Mammary epithelial cell (primary cell): ENCODE measurements at regions of chr11 and their contacts with region 1.

Region 1: DNA sequence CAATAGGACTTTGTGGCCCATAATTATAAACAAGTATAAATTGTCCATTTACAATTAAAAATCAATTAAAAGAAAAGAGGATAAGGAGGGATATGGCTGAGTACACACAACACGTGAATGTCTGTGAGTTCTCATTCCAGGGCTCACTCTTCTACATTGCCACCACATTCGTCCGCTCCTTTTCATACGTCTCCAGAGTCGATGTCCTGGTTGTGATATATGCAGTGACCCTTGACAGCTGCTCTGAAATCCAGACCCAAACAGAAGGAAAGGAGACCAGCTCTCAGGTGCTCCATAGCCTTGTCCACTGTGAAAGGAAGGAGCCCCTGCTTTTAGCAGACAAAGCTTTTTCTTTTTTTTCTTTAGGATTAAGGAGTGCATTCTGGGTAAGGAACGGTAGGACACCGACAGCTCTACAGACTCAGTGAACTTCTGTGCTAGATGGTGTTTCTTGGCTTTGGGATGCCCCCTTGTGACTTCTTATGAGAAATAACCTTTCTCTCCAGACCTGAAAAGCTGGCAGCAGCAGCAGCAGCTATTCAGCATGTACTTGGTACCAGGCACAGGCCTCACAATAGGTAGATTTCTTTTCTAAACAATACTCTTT is 19.7 kb upstream of the DNAJB13 start:
- DNase-seq: peak; percentile 68
- H3K4me3 ChIP-seq: no peak overlapping the region
- H3K27ac ChIP-seq: no peak overlapping the region
- H3K4me1 ChIP-seq: no peaks in the 10 kb centered on the region
- H3K27me3 ChIP-seq: no peaks in the 10 kb centered on the region
- CTCF ChIP-seq: peak; percentile 17 to 55

Region 2: DNA sequence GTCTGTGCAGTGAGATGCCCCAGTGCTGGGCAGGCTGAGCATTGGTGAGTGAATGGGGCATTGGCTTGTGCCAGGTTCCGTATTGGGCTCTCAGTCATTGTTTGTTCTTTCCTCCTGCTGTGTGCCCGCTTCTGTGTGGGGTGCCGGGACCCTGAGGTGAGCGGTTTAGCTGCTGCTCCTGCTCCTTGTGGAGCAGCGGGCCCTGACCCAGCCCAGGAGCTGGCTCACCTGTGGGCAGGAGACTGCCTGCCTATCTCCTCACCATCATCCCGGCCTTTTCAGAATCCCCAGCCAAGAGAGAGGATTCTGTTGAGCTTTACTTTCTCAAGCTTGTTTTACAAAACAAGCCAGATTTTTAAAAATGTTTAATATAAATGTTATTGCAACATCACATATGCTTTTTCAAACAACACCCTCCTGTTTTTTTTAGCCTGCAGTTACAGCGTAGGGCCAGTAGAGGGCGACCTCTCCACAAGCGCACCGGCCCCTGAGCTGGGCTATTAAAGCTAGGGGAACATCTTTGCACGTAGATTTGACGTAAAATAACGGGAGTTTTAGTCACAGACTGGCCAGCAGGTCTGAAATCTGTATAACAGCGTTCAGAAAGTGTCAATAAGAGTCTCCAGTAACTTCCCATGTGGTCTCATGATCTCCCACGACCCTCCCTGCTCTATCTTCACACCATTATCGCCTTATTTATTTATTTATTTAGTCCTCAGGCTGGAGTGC is 580.1 kb before region 1 on chr11:
- CTCF ChIA-PET with region 1: no interaction called
- dilution Hi-C with region 1: no loop called
- in situ Hi-C with region 1: no loop called
- intact Hi-C with region 1: loop called (anchors 1 kb)
- DNase-seq: peak; percentile 55
- H3K4me3 ChIP-seq: no peak overlapping the region
- H3K27ac ChIP-seq: no peak overlapping the region
- H3K4me1 ChIP-seq: peaks cover 7% of the 10 kb centered on the region
- H3K27me3 ChIP-seq: no peaks in the 10 kb centered on the region
- CTCF ChIP-seq: peak; percentile 97 to 99

Region 3: DNA sequence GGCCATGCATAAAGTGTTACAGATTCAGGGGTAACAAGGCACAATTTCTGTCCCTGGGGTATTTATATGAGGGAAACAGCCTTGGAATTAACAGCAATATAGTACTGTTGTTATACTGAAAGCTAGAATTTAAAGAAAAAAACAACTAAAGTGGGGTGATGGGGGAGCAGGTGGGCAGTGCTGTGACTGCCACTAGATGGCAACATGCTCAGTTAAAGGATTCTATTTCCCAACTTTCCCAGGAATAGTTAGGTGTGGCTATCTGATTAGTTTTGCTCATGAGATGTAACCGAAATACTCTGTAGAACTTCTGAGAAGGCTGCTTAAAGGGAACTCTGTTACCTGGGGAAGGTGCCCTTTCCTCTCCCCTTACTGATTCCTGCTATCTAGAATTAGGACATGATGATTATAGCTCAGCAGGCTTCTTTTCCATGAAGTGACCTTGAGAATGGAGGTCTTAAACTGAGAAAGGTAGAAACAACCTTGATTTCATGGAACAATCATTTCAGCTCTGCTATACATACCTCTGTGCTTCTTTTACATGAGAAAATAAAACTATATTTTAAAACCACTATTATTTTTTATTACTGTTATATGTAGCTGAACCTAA is 452.3 kb before region 1 on chr11:
- CTCF ChIA-PET with region 1: no interaction called
- dilution Hi-C with region 1: no loop called
- in situ Hi-C with region 1: no loop called
- intact Hi-C with region 1: loop called (anchors 2 kb)
- DNase-seq: peak; percentile 51
- H3K4me3 ChIP-seq: no peak overlapping the region
- H3K27ac ChIP-seq: peak overlapping the region; percentile 3
- H3K4me1 ChIP-seq: peaks cover 6% of the 10 kb centered on the region
- H3K27me3 ChIP-seq: no peaks in the 10 kb centered on the region
- CTCF ChIP-seq: peak; percentile 91 to 96

Region 4: DNA sequence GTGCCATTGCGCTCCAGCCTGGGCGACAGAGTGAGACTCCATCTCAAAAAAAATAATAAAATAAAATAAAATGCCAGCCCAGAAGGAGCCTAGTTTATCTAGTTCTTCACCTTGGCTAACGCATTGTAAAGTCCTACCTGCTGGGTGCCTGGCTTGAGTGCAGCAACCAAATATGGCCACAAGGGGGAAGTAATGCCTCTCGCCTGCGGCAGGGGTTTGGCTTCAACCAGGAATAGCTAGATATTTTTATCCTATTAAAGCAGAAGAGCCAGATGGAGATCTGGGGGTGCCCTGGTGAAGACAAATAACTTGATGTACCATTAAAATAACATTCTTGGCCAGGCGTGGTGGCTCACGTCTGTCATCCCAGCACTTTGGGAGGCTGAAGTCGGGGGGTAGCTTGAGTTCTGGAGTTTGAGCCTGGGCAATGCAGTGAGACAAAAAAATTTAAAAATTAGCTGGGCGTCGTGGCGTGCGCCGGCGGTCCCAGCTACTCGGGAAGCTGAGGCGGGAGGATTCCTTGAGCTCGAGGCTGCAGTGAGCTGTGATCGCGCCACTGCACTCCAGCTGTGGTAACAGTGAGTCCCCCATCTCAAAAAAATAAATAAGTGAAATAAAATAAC is 305.3 kb before region 1 on chr11:
- CTCF ChIA-PET with region 1: interaction called, 4 read pairs
- dilution Hi-C with region 1: no loop called
- in situ Hi-C with region 1: no loop called
- intact Hi-C with region 1: loop called (anchors 1 kb)
- DNase-seq: peak; percentile 61
- H3K4me3 ChIP-seq: no peak overlapping the region
- H3K27ac ChIP-seq: no peak overlapping the region
- H3K4me1 ChIP-seq: peaks cover 3% of the 10 kb centered on the region
- H3K27me3 ChIP-seq: no peaks in the 10 kb centered on the region
- CTCF ChIP-seq: peak; percentile 90

Region 5: DNA sequence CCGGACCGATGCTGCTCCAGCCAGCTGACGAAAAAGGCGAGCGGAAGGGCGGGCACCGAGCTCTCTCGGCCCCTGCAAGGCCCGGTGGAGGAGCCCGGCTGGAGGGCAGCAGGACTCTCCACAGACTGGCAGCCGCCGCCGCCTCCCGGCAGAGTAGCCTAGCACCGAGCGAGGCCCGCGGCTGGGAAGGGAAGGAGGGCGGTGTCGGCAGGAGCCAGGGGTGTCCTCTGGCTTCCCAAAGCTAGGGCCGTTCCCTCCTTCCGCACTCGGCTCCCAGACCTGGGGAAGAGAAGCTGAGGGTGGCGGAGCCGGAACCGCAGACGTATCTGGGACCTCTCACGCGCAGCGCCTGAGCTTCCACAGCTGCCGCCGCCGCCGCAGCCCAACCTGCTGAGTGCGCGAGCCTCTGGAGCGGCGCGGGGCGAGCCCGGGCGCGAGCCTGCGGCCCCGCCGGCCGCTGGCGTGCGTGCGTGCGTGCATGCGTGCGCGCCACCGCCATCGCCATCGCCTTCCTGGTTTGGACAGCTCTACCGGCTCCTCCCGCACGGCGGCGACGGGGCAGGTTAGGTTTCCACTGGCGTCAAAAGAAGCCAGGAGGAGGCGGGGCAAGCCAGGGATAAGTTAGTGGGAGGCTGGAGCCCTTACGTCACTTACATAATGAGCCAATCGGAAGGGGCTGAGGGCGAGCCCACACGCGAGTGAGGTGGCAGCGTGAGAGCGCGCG is 170.3 kb before region 1 on chr11 and contains the start of gene RAB6A:
- CTCF ChIA-PET with region 1: interaction called, 5 read pairs
- dilution Hi-C with region 1: no loop called
- in situ Hi-C with region 1: no loop called
- intact Hi-C with region 1: loop called (anchors 2 kb)
- DNase-seq: peak; percentile 99
- H3K4me3 ChIP-seq: peak within 1 kb of the TSS; percentile 83 to 91 (median 88)
- H3K27ac ChIP-seq: peak within 1 kb of the TSS; percentile 62
- H3K4me1 ChIP-seq: peaks cover 6% of the 10 kb centered on the region
- H3K27me3 ChIP-seq: no peaks in the 10 kb centered on the region
- CTCF ChIP-seq: peak; percentile 5 to 35
- total RNA-seq, gene RAB6A: 189 to 218 TPM